ENCODE measurements at regions of chr11 and their contacts with region 1.

Region 1: GRCh38 chr11:45245218-45246045 is 40.7 kb downstream of the SYT13 start:
- DNase-seq: no peak
- H3K4me3 ChIP-seq: no peak overlapping the region
- H3K4me3 Mint-ChIP-seq: no peak overlapping the region
- H3K27ac Mint-ChIP-seq: no peak overlapping the region
- H3K4me1 ChIP-seq: peaks cover 7% of the 10 kb centered on the region; the same call in 1 of the 2 replicates
- H3K4me1 Mint-ChIP-seq: peaks cover 7% of the 10 kb centered on the region
- H3K27me3 ChIP-seq: no peaks in the 10 kb centered on the region
- H3K27me3 Mint-ChIP-seq: no peaks in the 10 kb centered on the region
- CTCF ChIP-seq: no peak

Region 2: DNA sequence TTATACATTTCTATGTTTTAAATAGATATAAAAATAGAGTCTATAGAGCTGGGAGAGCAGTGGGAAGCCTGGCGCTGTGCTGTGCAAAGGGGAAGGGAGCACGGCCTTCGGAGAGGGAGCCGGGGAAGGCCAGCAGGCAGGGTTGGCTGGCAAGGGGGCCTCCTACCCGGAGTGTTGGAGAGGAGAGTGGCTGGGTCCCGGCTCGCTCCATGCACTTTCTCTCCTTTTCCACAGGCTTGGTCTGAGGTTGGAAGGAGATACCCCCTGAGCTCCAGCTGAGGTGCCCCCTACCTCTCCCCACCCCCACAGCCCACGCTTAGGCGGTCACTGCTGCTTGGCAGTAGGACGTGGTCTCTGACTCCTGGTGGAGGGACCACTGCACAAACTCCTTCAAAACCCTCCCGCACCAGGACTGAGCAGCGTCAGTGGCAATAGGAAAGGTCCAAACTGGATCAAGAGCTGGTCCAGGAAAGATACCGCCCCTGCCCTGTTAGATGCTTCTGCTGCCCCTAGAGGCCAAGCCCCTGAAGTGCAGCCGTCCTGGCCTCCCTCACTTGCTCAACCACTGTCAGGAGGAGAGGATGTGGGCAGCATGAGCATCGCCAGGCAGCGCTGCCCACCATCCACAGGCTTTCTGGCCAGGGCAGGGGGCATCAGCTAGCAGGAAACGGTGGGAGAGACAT is 12.2 kb before region 1 on chr11:
- CTCF ChIA-PET with region 1: interaction called, 11 read pairs
- POLR2A ChIA-PET with region 1: no interaction called
- intact Hi-C with region 1: no loop called
- DNase-seq: peak; percentile 72 to 81
- H3K4me3 ChIP-seq: no peak overlapping the region
- H3K4me3 Mint-ChIP-seq: no peak overlapping the region
- H3K27ac Mint-ChIP-seq: no peak overlapping the region
- H3K4me1 ChIP-seq: no peaks in the 10 kb centered on the region
- H3K4me1 Mint-ChIP-seq: no peaks in the 10 kb centered on the region
- H3K27me3 ChIP-seq: no peaks in the 10 kb centered on the region
- H3K27me3 Mint-ChIP-seq: peaks cover 9% of the 10 kb centered on the region
- CTCF ChIP-seq: peak; percentile 78 to 85

Measured in Caco-2 (cell line).